ENCODE measurements at regions of chr22 and their contacts with region 1.

Region 1: DNA sequence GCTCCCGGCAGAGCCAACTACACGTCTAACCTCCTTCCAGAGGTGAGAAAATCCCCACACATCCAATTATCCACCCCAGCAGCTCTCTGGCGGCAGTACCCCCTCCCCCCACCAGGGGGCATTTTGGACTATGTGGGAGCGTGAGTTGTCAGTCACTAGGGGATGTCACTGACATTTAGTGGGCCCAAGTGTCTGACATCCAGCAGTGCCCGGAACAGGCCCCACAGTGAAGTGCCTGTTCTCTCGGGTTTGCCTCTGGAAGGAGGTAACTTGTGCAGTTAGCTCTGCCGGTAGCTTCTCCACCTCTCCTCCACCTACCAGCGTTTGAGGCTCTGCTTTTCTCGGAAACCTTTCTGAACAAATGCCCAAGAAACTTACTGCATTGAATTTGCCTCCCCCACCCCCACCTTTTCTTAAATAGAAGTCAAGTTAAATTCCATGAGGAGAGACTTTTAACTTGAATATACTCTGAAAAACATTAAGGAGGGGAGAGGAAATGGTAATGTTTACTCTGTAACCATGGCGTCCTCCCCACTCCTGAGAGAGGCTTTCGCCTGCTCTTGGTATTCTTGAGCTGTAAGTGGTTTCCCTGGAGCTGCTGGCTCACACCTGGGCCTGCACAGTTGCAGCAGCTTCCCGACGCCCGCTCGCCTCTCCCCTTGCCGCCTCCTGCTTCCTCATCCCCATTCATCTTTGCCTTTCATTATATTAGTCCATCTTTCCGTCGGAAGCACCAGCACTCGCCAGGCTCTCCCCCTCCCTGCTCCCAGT is 112.8 kb downstream of the WNT7B start:
- DNase-seq: peak; percentile 45 to 62
- ATAC-seq: peak in 1 of 2 experiments; percentile 31; a peak in 3 of 6 replicates
- H3K4me3 ChIP-seq: no peak overlapping the region
- H3K27ac ChIP-seq: peak overlapping the region; percentile 35 to 74; a peak in 5 of 6 replicates
- H3K4me1 ChIP-seq: peaks cover 39% of the 10 kb centered on the region
- CTCF ChIP-seq: peak; percentile 55
- EP300 ChIP-seq: no peak
- POLR2A ChIP-seq: no peak
- RAD21 ChIP-seq: peak; percentile 61 to 62

Region 2: DNA sequence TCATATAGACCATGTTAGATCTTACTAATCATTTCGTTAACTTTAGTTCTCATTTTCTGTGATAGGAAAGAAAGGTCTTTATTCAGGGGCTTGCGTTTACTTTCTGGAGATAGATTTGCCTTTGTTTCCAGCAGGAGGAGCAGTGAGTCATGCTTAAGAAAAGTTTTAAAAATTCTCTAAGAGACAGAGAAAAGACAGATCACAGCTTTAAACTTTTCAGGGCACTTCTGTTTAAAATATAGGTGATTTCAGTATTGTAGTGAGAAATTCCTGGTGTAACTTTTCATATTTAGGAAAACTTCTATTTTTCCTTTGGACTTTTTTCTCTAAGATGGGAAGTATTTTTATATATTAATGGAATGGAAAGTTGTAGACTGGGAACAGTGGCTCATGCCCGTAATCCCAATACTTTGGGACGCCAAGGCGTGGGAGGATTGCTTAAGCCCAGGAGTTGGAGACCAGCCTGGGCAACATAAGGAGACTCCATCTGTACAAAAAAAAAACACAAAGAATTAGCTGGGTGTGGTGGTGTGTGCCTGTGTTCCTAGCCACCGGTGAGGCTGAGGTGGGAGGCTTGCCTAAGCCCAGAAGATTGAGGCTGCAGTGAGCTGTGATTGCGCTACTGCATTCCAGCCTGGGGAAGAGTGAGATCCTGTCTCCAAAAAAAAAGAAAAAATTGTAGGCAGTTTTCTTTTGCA is 132.2 kb before region 1 on chr22:
- CTCF ChIA-PET with region 1: interaction called, 3 read pairs
- POLR2A ChIA-PET with region 1: interaction called, 10 read pairs
- DNase-seq: peak; percentile 28 to 53
- ATAC-seq: peak; percentile 62 to 74; a peak in 4 of 6 replicates
- H3K4me3 ChIP-seq: no peak overlapping the region
- H3K27ac ChIP-seq: peak overlapping the region; percentile 75 to 84
- H3K4me1 ChIP-seq: peaks cover 66% of the 10 kb centered on the region
- CTCF ChIP-seq: peak; percentile 58
- EP300 ChIP-seq: no peak
- POLR2A ChIP-seq: no peak
- RAD21 ChIP-seq: peak; percentile 50 to 58

Region 3: GRCh38 chr22:45842291-45842991 is 21.7 kb before region 1 on chr22:
- CTCF ChIA-PET with region 1: interaction called, 15 read pairs
- POLR2A ChIA-PET with region 1: no interaction called
- DNase-seq: no peak
- ATAC-seq: no peak
- H3K4me3 ChIP-seq: no peak overlapping the region
- H3K27ac ChIP-seq: no peak overlapping the region
- H3K4me1 ChIP-seq: peaks cover 4% of the 10 kb centered on the region; the same call in 2 of the 3 replicates
- CTCF ChIP-seq: no peak
- EP300 ChIP-seq: no peak
- POLR2A ChIP-seq: no peak
- RAD21 ChIP-seq: no peak

Region 4: GRCh38 chr22:45878051-45878781 is 14.1 kb after region 1 on chr22:
- CTCF ChIA-PET with region 1: interaction called, 17 read pairs
- POLR2A ChIA-PET with region 1: no interaction called
- DNase-seq: no peak
- ATAC-seq: no peak; a peak in 1 of 6 replicates
- H3K4me3 ChIP-seq: no peak overlapping the region
- H3K27ac ChIP-seq: no peak overlapping the region
- H3K4me1 ChIP-seq: no peaks in the 10 kb centered on the region
- CTCF ChIP-seq: no peak
- EP300 ChIP-seq: no peak
- POLR2A ChIP-seq: no peak
- RAD21 ChIP-seq: no peak

Region 5: DNA sequence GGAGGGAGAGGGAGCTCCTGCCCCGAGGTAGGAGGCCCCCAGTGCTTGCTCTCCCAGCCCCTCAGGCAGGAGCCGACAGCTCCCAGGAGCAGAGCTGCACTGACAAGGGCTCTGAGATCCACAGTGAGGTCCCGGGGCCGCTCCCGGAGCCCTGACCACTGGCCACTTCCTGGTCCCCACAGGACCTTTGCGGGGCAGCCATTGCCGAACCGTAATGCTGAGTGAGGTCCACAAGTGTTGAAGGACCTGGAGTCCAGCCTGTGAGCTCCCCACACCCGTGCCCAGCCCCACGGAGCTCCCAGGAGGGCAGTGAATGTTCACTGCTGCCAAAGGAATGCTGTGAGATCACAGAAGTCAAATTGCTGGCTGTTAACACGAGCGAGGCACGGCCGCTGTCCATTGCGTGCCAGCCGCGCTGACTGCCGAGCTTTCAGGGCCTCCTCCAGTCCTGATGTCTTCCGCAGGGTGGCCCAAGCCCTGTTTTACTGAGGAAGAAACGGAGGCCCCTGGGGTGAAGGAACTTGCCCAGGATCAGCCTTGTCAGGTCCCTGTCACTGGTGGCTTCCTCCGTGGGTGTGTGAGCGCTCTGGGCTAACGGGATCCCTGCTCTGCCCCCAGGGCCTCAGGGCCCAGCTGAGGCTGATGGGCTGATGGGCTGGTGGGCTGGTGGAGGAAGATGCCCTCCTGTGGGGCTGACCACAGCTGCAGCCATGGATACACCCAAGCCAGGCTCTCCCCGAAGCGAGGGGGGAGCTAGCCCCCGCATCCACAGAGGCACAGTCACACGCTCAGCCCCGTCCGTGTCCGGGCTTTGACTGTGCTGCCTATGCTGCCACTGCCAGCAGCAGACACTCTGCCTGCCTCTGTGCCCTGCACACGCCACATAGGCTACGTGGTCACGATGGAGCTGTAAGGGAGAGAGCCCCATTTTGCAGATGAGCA is 42.0 kb after region 1 on chr22:
- CTCF ChIA-PET with region 1: interaction called, 23 read pairs
- POLR2A ChIA-PET with region 1: no interaction called
- DNase-seq: no peak
- ATAC-seq: no peak
- H3K4me3 ChIP-seq: no peak overlapping the region
- H3K27ac ChIP-seq: peak overlapping the region in 1 of 2 experiments; percentile 63; a peak in 3 of 6 replicates
- H3K4me1 ChIP-seq: peaks cover 28% of the 10 kb centered on the region
- CTCF ChIP-seq: no peak
- EP300 ChIP-seq: no peak
- POLR2A ChIP-seq: no peak
- RAD21 ChIP-seq: no peak

Region 6: GRCh38 chr22:45911601-45912271 is 47.6 kb after region 1 on chr22:
- CTCF ChIA-PET with region 1: interaction called, 23 read pairs
- POLR2A ChIA-PET with region 1: no interaction called
- DNase-seq: peak; percentile 72 to 96
- ATAC-seq: peak; percentile 55 to 75
- H3K4me3 ChIP-seq: 0 out of 3 replicates have a peak overlapping the region, but pooled peaks have one; percentile 17
- H3K27ac ChIP-seq: peak overlapping the region; percentile 85 to 94
- H3K4me1 ChIP-seq: peaks cover 38% of the 10 kb centered on the region
- CTCF ChIP-seq: peak; percentile 39; the same call in 2 of the 3 replicates
- EP300 ChIP-seq: peak; percentile 85 to 92; a peak in 4 of 5 replicates
- POLR2A ChIP-seq: no peak
- RAD21 ChIP-seq: peak; percentile 36 to 59; a peak in 4 of 5 replicates

Region 7: GRCh38 chr22:46071451-46072109 is 207.4 kb after region 1 on chr22:
- CTCF ChIA-PET with region 1: no interaction called
- POLR2A ChIA-PET with region 1: no interaction called
- DNase-seq: peak in 1 of 2 experiments; percentile 92
- ATAC-seq: peak; percentile 9 to 37; a peak in 4 of 6 replicates
- H3K4me3 ChIP-seq: peak overlapping the region; percentile 73
- H3K27ac ChIP-seq: peak overlapping the region; percentile 99 to 100
- H3K4me1 ChIP-seq: peaks cover 17% of the 10 kb centered on the region
- CTCF ChIP-seq: no peak
- EP300 ChIP-seq: no peak
- POLR2A ChIP-seq: peak; percentile 87
- RAD21 ChIP-seq: no peak

Region 8: DNA sequence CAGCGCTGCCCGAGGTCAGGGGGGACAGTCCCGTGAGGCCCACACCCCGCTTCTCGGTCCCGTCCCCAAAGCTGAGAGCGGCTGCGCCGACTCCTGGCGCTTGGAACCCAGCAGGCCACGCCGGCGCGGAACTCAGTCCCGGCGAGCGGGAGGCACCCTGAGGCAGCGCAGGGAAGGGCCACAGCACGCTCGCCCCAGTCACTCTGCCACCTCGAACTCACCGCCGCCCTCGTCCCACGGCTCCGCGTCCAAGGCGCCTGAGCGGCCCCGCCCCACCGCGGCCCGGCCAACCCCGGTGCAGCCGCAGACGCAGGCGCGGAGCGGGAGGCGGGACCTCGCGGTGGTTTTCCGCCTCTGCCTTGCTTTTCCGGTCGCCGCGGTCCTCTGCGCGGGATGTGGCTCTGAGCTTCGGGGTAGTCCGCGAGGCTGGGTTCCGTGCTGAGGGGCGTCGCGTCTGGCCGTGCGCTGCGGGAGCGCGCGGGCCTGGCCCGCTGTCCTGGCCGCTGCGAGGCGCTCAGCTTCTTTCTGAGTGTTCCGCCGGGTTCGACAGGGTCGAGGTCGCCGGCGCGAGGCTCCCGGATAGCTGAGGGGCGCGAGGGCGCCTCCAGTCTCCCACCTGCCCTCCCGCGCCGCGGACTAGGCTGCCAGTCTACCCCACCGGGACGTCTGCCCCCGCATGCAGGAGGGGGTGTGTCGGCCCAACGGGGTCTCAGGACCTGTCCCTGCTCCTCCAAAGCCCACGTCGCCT is 386.0 kb after region 1 on chr22 and contains the start of gene CDPF1:
- CTCF ChIA-PET with region 1: no interaction called
- POLR2A ChIA-PET with region 1: no interaction called
- DNase-seq: peak; percentile 69 to 77
- ATAC-seq: peak; percentile 95 to 99
- H3K4me3 ChIP-seq: peak within 1 kb of the TSS; percentile 96
- H3K27ac ChIP-seq: peak within 1 kb of the TSS; percentile 95 to 96
- H3K4me1 ChIP-seq: peaks cover 5% of the 10 kb centered on the region; the same call in 1 of the 3 replicates
- CTCF ChIP-seq: no peak
- EP300 ChIP-seq: no peak
- POLR2A ChIP-seq: peak; percentile 74
- RAD21 ChIP-seq: no peak
- polyA plus RNA-seq, gene CDPF1: 7.9 and 8.9 TPM in 2 replicates

Measured in A549 (cell line).